ENCODE measurements at regions of chr10 and their contacts with region 1.

Region 1: GRCh38 chr10:70461215-70461986 is 17.2 kb upstream of the PALD1 start:
- DNase-seq: peak; percentile 37 to 60
- ATAC-seq: peak; percentile 56 to 67
- H3K4me3 ChIP-seq: no peak overlapping the region
- H3K27ac ChIP-seq: peak overlapping the region in 2 of 4 donors; percentile 9 to 87
- H3K4me1 ChIP-seq: peaks cover 13 to 23% of the 10 kb centered on the region in 2 donors
- H3K27me3 ChIP-seq: no peaks in the 10 kb centered on the region
- CTCF ChIP-seq: peak; percentile 82 to 93 (median 87)
- POLR2A ChIP-seq: no peak

Region 2: DNA sequence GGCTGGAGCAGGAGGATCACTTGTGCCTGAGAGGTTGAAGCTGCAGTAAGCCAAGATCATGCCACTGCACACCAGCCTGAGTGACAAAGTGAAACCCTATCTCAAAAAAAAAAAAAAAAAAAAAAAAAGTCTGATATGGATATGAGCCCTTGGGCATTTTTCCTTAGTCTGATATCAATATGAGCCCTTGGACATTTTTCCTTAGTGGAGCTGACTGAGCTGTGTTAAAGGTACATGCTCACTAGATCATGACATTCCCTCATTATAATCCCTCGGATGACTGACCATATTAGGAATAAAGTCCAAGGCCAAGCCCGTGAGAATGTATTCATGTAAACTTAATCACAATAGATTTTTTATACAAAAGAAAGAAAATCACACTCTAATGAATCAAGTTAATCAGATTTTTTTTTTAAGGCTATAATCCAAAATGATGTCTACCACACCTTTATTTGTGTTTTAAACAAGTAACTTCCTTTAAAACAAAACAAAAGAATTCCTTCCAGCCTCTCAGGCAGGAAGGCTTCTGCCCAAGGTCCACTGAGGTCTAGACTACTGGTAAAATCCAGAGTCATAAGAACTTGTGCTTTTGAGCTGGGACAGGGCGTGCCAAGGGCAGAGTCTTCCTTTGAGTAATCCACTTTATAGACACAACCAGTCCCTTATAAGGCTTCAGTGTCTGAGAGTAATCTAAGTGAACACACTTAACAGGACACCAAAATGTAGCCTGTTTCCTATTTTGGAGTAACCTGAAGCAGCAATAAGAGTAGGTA is 233.7 kb before region 1 on chr10:
- in situ Hi-C with region 1: no loop called
- intact Hi-C with region 1: no loop called
- DNase-seq: no peak
- ATAC-seq: no peak
- H3K4me3 ChIP-seq: no peak overlapping the region
- H3K27ac ChIP-seq: peak overlapping the region; percentile 11 to 25 (median 18)
- H3K4me1 ChIP-seq: peaks cover 18 to 19% of the 10 kb centered on the region in 2 donors
- H3K27me3 ChIP-seq: no peaks in the 10 kb centered on the region
- CTCF ChIP-seq: no peak
- POLR2A ChIP-seq: no peak

Region 3: GRCh38 chr10:70381471-70382421 is 79.7 kb before region 1 on chr10:
- in situ Hi-C with region 1: no loop called
- intact Hi-C with region 1: no loop called
- DNase-seq: peak; percentile 82 to 91
- ATAC-seq: peak; percentile 59 to 60
- H3K4me3 ChIP-seq: peak overlapping the region; percentile 71 to 85 (median 72)
- H3K27ac ChIP-seq: peak overlapping the region; percentile 91 to 97 (median 95)
- H3K4me1 ChIP-seq: peaks cover 44 to 47% of the 10 kb centered on the region in 2 donors
- H3K27me3 ChIP-seq: no peaks in the 10 kb centered on the region
- CTCF ChIP-seq: peak in 1 of 5 experiments; percentile 37
- POLR2A ChIP-seq: peak; percentile 81 to 84

Region 4: DNA sequence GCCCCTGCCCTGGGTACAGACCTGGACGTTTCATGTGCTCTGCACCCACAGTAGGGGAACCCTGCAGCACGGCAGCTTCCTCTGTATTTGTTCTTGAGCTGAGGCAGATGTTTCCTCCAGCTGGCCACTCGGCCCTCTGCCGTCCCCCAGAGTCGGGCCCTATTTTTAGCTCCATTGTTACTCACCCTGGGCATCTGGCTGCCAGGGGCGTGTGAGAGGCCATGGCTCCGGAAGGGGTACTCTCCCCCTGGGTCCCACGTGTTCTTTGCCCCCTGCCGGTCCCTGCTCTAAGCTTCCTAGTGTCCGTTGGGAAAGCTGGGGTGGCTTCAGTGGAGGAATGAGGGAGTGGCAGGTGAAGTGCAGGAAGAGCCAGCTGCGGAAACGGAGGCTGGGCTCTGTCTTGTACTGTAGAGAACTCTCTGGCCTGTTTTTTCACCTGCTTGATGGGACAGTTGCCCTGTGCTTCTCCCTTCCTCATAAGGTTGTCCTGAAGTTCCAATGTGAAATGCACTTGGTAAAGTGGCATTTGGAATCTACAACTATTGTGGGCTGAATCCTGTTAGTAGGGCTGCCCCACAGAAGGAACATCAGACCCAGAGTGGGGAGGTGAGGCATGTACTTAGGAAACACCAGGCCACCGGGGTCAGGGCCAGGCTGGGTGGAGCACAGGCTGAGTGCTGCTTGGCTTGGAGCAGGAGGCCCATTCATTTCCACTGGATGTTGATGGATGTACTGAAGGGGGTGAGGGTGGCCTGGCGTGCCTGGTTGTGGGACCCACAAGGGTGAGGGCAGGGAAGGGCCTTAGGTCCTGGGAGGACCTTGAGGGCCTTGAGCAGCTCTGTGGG is 47.7 kb after region 1 on chr10:
- in situ Hi-C with region 1: loop called in 1 of 4 experiments (anchors 10 kb)
- intact Hi-C with region 1: loop called (anchors 2 kb)
- DNase-seq: peak; percentile 32 to 66
- ATAC-seq: peak; percentile 69
- H3K4me3 ChIP-seq: peak overlapping the region in 2 of 4 donors; percentile 21 to 37
- H3K27ac ChIP-seq: peak overlapping the region; percentile 62 to 79 (median 74)
- H3K4me1 ChIP-seq: peaks cover 55 to 58% of the 10 kb centered on the region in 2 donors
- H3K27me3 ChIP-seq: no peaks in the 10 kb centered on the region
- CTCF ChIP-seq: peak in 1 of 5 experiments; percentile 17
- POLR2A ChIP-seq: no peak

Region 5: GRCh38 chr10:70540089-70540788 is 78.8 kb after region 1 on chr10:
- in situ Hi-C with region 1: loop called in 1 of 4 experiments (anchors 5 kb)
- intact Hi-C with region 1: loop called (anchors 1 kb)
- DNase-seq: no peak
- ATAC-seq: no peak
- H3K4me3 ChIP-seq: no peak overlapping the region
- H3K27ac ChIP-seq: no peak overlapping the region
- H3K4me1 ChIP-seq: no peaks in the 10 kb centered on the region
- H3K27me3 ChIP-seq: no peaks in the 10 kb centered on the region
- CTCF ChIP-seq: peak; percentile 33 to 72 (median 64)
- POLR2A ChIP-seq: no peak

Region 6: GRCh38 chr10:70558871-70559810 is 97.7 kb after region 1 on chr10:
- in situ Hi-C with region 1: no loop called
- intact Hi-C with region 1: no loop called
- DNase-seq: no peak
- ATAC-seq: peak in 1 of 2 donors; percentile 45
- H3K4me3 ChIP-seq: no peak overlapping the region
- H3K27ac ChIP-seq: no peak overlapping the region
- H3K4me1 ChIP-seq: peaks cover 9% of the 10 kb centered on the region in 2 donors
- H3K27me3 ChIP-seq: no peaks in the 10 kb centered on the region
- CTCF ChIP-seq: peak in 4 of 5 experiments; percentile 38 to 48 (median 44)
- POLR2A ChIP-seq: no peak

Region 7: DNA sequence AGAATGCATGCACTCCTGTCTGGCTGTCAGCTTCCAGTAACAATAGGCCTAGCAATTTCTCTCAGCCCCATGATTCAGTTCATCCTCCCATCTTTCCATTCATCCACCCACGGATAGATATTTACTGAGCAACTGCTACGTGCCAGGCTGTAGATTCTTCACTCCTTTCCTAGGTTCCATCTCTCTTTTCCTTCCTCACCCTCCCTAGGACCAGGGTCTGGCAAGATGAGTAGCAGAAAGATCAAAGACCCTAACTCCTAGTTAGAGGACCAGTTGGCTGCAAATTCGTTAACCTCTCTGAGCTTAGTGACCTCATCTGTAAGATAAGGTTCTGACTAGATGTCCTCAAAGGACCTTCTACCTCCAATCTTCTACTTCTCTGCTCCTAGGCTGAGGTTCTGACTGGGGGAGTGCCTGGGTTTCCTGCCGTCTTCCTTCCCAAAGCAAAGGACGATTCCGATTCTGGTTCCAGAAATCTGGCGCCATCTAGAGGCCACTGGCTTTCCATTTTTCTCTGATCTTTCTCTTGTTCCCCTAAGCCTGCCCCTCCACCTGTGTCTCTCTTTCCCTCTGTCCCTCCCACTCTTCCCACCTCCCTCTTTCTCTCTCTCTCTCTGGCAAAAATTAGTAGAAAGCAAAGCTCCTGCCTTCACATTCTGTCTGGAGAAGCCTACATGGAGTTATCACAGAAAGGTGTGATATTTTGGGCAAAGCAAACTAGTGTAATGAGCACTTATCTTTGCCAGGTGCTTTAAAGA is 297.5 kb after region 1 on chr10:
- in situ Hi-C with region 1: loop called in 3 of 4 experiments (anchors 5 to 25 kb)
- intact Hi-C with region 1: loop called (anchors 1 kb)
- DNase-seq: peak; percentile 34 to 45
- ATAC-seq: peak; percentile 65 to 89
- H3K4me3 ChIP-seq: no peak overlapping the region
- H3K27ac ChIP-seq: no peak overlapping the region
- H3K4me1 ChIP-seq: no peaks in the 10 kb centered on the region
- H3K27me3 ChIP-seq: no peaks in the 10 kb centered on the region
- CTCF ChIP-seq: peak; percentile 30 to 77 (median 66)
- POLR2A ChIP-seq: no peak

Region 8: GRCh38 chr10:70880077-70880534 is 418.7 kb after region 1 on chr10:
- in situ Hi-C with region 1: no loop called
- intact Hi-C with region 1: loop called (anchors 10 kb)
- DNase-seq: peak; percentile 54 to 73
- ATAC-seq: peak; percentile 91 to 92
- H3K4me3 ChIP-seq: no peak overlapping the region
- H3K27ac ChIP-seq: no peak overlapping the region
- H3K4me1 ChIP-seq: no peaks in the 10 kb centered on the region
- H3K27me3 ChIP-seq: no peaks in the 10 kb centered on the region
- CTCF ChIP-seq: peak; percentile 88 to 94 (median 91)
- POLR2A ChIP-seq: no peak

Measured in gastrocnemius medialis (tissue), 4 donors.